ENCODE measurements at regions of chr15 and their contacts with region 1.

Region 1: GRCh38 chr15:62606376-62607113 is 436.0 kb upstream of the TPM1 start:
- DNase-seq: peak; percentile 97
- H3K4me3 ChIP-seq: no peak overlapping the region
- H3K27ac ChIP-seq: peak overlapping the region; percentile 69
- H3K4me1 ChIP-seq: peaks cover 39% of the 10 kb centered on the region
- H3K27me3 ChIP-seq: no peaks in the 10 kb centered on the region
- CTCF ChIP-seq: no peak

Region 2: DNA sequence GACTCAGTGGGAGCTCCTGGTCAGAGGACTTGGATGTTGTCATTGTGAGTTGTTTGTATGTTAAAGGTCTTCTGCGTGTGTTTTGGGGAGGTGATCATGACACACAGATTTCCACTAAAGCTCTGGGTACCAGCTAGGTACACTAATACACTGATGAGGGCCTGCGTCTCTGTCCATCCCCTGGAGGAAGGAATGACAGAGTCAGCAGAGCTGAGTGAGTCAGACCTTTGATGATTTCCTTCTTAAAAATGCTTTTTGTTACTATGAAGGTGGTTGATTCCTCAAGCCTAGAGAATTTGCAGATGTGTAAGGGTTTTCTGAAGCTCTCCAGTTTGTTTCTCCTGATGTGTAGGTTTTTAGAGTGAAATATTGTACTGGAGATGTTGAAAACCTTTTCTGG is 11.9 kb after region 1 on chr15:
- CTCF ChIA-PET with region 1: no interaction called
- dilution Hi-C with region 1: no loop called
- in situ Hi-C with region 1: no loop called
- intact Hi-C with region 1: loop called (anchors 2 kb)
- DNase-seq: peak; percentile 88
- H3K4me3 ChIP-seq: no peak overlapping the region
- H3K27ac ChIP-seq: peak overlapping the region; percentile 13
- H3K4me1 ChIP-seq: peaks cover 30% of the 10 kb centered on the region
- H3K27me3 ChIP-seq: no peaks in the 10 kb centered on the region
- CTCF ChIP-seq: peak; percentile 36 to 63

Region 3: GRCh38 chr15:62649793-62650420 is 43.4 kb after region 1 on chr15:
- CTCF ChIA-PET with region 1: no interaction called
- dilution Hi-C with region 1: no loop called
- in situ Hi-C with region 1: no loop called
- intact Hi-C with region 1: loop called (anchors 2 kb)
- DNase-seq: peak; percentile 12
- H3K4me3 ChIP-seq: no peak overlapping the region
- H3K27ac ChIP-seq: no peak overlapping the region
- H3K4me1 ChIP-seq: peaks cover 15% of the 10 kb centered on the region
- H3K27me3 ChIP-seq: no peaks in the 10 kb centered on the region
- CTCF ChIP-seq: no peak

Measured in mammary epithelial cell (primary cell).